ENCODE measurements at regions of chr3 and their contacts with region 1.

Region 1: DNA sequence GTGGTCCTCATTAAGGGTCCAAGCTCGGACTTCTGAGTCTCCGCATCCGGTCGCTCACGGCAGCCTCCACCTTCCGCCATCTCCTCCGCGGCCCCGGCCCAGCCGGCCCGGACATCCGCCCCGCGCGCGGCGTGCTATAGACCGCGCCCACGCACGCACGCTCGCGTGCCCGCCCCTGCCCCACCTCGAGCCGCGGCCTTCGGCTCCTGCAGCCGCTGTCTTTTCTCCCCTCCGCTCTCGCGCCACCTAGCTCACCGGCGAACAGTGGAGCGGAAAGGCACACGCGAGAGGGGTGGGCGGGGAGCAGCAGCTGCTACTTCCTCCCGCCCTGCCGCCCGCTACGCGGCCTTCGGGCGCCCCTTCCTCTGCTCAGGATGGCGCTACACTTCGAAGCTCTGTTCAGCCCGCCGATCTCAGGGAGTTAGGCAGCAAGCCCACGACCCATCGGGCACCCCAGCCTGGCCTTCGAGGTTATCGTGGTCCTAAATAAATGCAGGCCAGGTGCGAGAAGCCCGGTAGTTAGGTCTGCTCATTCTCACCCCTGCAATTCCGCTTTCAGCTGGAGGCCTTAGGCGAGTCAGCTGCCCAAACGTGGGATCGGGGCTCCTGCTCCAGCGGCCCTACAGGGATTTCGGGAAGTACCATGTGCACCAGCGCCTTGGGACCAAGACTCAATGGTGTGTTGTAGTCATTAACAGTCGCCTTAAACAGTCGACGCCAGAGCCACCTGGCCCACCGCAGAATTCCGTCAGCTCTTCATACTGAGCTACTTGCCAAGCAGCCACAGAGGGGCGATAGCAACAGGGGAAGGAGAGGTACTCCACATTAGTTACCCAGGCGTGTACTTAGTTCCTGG is at the start of gene USP4:
- DNase-seq: peak; percentile 94 to 99 (median 98)
- H3K4me3 ChIP-seq: peak within 1 kb of the TSS; percentile 72 to 92 (median 87)
- H3K27ac ChIP-seq: peak within 1 kb of the TSS; percentile 98 to 99
- H3K4me1 ChIP-seq: peaks cover 12 to 63% (median 59%) of the 10 kb centered on the region in 4 experiments
- H3K27me3 ChIP-seq: no peaks in the 10 kb centered on the region

Region 2: DNA sequence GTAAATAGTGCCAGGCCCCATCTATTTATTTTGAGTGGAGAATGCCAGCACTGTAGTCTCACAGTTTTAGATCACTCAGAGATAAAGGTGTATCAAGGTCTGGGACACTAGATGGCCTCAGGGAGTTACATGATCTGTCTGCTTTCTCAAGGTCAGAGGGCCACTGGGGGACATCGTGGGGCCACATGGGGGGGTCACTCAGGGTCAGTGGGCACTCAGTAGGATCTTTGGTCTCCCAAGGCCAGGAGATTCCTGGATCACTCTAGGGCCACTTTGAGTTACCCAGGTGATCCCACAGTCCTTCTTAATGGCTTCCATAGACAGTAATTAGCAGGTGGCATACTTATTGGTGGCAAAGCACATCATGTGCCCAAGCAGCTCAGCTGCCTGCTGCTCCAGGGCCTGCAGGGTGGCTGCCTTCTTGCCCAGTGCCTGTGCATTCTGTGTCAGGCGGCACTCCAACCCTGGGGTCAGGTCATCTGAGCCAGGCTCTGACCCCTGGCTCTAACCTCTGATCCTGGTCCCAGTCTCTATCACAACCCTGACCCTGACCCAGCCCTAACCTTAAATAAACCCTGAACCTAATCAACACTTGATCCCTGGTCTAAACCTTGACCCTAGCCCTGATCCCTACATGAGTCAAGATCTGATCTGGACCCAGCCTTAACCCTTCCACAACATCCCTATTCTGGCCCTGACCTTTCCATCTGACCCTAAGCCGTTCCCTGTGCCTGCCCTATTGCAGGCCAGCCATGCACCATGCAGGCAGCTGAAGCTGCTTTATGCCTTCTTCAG is 205.5 kb before region 1 on chr3:
- CTCF ChIA-PET with region 1: no interaction called
- POLR2A ChIA-PET with region 1: no interaction called
- DNase-seq: no peak
- H3K4me3 ChIP-seq: no peak overlapping the region
- H3K27ac ChIP-seq: no peak overlapping the region
- H3K4me1 ChIP-seq: peaks cover 5 to 25% (median 18%) of the 10 kb centered on the region in 4 experiments
- H3K27me3 ChIP-seq: peaks cover 0 to 1% (median 0%) of the 10 kb centered on the region in 5 experiments

Region 3: GRCh38 chr3:49351521-49352011 is 11.4 kb after region 1 on chr3:
- CTCF ChIA-PET with region 1: interaction called, 50 read pairs
- POLR2A ChIA-PET with region 1: interaction called, 51 read pairs
- DNase-seq: peak in 2 of 3 donors; percentile 69 to 79
- H3K4me3 ChIP-seq: peak overlapping the region in 2 of 7 experiments; percentile 3 to 33
- H3K27ac ChIP-seq: peak overlapping the region; percentile 37 to 75
- H3K4me1 ChIP-seq: peaks cover 25 to 67% (median 64%) of the 10 kb centered on the region in 4 experiments
- H3K27me3 ChIP-seq: no peaks in the 10 kb centered on the region

Region 4: DNA sequence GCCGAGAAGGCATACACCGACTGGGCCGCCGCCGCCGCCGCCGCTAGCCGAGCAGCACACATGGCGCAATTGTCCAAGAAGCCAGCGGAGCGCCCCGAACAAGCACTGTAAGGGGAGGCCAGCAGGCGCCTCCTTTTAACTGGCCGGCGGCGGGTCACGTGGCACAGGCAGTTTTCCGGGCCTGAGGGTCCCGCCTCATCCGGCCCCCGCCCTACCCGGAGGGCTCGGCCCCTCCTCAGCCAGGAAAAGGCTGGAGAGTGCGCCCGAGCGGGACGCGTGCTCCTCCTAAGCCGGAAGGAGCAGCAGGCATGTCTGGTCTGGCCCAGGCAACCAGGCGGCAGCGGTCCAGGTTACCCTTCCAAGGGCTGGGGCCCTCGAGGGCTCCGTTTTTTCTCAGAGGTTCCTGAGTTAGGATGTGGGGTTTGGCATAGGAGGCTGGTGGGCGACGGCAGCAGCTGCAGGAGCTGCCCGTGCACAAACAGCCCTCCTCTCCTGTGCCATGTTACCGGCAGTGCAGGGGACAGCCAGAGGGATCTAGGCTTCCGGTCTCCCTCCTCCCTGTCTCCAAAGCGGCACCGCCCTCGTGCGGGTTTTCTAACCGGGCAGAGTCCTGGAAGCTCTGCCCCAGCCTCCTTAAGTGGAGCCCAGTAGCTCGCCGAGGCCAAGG is 18.2 kb after region 1 on chr3 and contains the start of gene GPX1:
- CTCF ChIA-PET with region 1: interaction called, 50 read pairs
- POLR2A ChIA-PET with region 1: interaction called, 51 read pairs
- DNase-seq: peak; percentile 82 to 91 (median 88)
- H3K4me3 ChIP-seq: peak within 1 kb of the TSS; percentile 64 to 96 (median 86)
- H3K27ac ChIP-seq: peak within 1 kb of the TSS; percentile 92 to 93
- H3K4me1 ChIP-seq: peaks cover 13 to 42% (median 33%) of the 10 kb centered on the region in 4 experiments
- H3K27me3 ChIP-seq: no peaks in the 10 kb centered on the region

Region 5: DNA sequence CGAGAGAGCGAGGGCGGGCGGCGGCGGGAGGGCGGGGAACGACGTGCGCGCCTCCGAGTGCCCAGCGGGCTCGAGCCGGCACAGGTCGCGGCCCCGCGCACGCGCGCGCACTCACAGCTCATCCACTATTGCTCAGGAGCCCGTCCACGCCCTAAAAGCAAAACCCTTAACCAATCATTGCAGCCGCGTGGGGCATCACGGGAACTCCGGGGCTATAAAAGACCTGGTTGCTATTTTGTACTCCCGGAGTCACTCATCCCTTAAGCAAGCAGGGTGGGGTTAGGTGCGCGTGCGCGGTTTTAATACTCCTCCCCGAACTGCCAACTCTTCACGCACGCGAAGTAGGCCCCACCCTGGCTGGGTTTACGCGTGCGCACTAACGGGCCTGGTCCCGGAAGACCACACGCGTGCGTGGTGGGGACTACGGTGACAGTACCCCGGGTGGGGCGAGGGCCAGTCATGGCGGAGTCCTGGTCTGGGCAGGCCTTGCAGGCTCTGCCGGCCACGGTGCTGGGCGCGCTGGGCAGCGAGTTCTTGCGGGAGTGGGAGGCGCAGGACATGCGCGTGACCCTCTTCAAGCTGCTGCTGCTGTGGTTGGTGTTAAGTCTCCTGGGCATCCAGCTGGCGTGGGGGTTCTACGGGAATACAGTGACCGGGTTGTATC is 71.9 kb after region 1 on chr3 and contains the starts of genes RHOA and TCTA:
- CTCF ChIA-PET with region 1: interaction called, 12 read pairs
- POLR2A ChIA-PET with region 1: interaction called, 17 read pairs
- DNase-seq: peak; percentile 100
- H3K4me3 ChIP-seq: peak within 1 kb of the TSS; percentile 72 to 97 (median 92)
- H3K27ac ChIP-seq: peak within 1 kb of the TSS; percentile 91 to 96
- H3K4me1 ChIP-seq: peaks cover 42 to 71% (median 58%) of the 10 kb centered on the region in 4 experiments
- H3K27me3 ChIP-seq: no peaks in the 10 kb centered on the region

Region 6: DNA sequence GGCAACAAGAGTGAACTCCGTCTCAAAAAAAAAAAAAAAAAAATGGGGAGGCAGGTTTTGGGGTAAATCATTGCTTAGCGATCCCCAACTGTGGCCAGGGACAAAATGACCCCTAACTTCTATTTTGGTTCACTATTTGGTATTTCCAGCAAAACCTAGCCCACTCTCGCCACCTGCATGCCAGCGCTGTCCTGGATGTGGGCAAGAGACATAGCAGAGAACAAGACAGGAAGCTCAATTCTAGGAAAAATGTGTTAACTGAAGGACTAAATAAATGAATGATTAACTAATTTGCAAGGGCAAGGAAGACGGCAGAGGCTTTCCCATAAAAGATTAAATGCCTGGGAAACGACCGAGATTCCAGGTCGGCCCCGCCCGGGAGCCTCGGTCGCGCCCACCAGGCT is 88.5 kb after region 1 on chr3:
- CTCF ChIA-PET with region 1: interaction called, 8 read pairs
- POLR2A ChIA-PET with region 1: interaction called, 12 read pairs
- DNase-seq: peak in 1 of 3 donors; percentile 41
- H3K4me3 ChIP-seq: peak overlapping the region; percentile 58 to 95 (median 83)
- H3K27ac ChIP-seq: peak overlapping the region in 1 of 2 experiments; percentile 91
- H3K4me1 ChIP-seq: peaks cover 2 to 19% (median 12%) of the 10 kb centered on the region in 4 experiments
- H3K27me3 ChIP-seq: no peaks in the 10 kb centered on the region

Region 7: DNA sequence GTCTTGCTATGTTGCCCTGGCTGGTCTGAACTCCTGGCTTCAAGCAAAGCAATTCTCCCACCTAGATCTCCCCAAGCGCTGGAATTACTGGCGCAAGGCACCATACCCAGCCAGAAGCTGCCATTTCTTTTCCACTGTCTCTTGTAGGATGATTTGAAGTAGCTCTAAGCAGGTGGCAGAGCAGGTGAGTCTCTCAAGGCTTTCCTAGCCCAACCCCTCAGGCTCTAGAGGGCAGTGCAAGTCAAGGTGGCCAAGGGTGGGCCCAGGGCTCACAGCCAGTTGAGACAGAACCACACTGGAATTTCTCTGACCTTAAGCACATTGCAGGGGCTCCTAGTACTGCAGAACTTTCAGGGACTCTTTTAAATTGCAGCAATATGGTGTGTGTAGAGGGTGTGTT is 114.3 kb after region 1 on chr3:
- CTCF ChIA-PET with region 1: interaction called, 18 read pairs
- POLR2A ChIA-PET with region 1: interaction called, 4 read pairs
- DNase-seq: no peak
- H3K4me3 ChIP-seq: no peak overlapping the region
- H3K27ac ChIP-seq: no peak overlapping the region
- H3K4me1 ChIP-seq: no peaks in the 10 kb centered on the region
- H3K27me3 ChIP-seq: peaks cover 0 to 4% (median 0%) of the 10 kb centered on the region in 5 experiments